ENCODE measurements at regions of chr17 and their contacts with region 1.

Region 1: DNA sequence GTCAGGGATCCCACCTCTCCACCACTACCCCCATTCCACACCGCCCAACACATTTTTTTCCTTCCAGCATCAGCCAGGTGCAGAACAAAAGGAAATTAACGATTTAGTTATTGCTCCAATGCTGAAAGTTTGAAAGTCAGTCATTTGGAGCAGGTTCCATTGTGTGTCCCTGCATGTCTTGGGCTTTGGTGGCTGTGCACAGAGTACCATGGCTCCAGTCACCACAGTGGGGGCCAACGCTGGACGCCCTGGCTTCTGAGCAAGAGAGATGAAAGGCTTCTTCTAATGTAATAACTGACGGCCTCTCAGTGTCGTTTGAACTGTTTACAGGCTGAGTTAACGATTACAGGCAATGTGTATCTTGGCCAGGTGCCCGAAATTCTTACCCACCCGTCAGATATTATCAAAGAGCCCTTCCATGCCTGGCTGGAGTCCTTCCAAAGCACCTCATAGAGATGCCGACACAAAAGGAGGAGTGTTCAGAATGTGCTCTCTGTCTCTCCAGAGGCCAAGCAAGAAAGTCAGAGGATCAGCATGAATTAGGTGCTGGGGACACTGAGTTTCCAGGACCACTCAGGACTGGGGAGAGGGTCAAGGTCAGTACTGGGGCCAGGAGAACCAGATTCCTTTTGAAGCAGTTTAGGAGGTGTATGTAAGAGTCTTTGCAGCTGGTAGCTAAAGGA is 25.9 kb downstream of the RNF43 start:
- DNase-seq: peak; percentile 34 to 91 (median 56)
- ATAC-seq: peak; percentile 89
- H3K4me3 ChIP-seq: no peak overlapping the region
- H3K27ac ChIP-seq: peak overlapping the region; percentile 72; the same call in 2 of the 3 replicates
- H3K4me1 ChIP-seq: peaks cover 19 to 55% of the 10 kb centered on the region in 2 experiments
- H3K27me3 ChIP-seq: no peaks in the 10 kb centered on the region
- CTCF ChIP-seq: no peak
- EP300 ChIP-seq: peak; percentile 85
- POLR2A ChIP-seq: no peak
- RAD21 ChIP-seq: no peak

Region 2: GRCh38 chr17:58172369-58173071 is 218.9 kb before region 1 on chr17:
- CTCF ChIA-PET with region 1: no interaction called
- POLR2A ChIA-PET with region 1: no interaction called
- in situ Hi-C with region 1: no loop called
- intact Hi-C with region 1: no loop called
- DNase-seq: peak; percentile 35 to 41 (median 38)
- ATAC-seq: peak; percentile 73; the same call in 2 of the 3 replicates
- H3K4me3 ChIP-seq: no peak overlapping the region
- H3K27ac ChIP-seq: no peak overlapping the region
- H3K4me1 ChIP-seq: no peaks in the 10 kb centered on the region
- H3K27me3 ChIP-seq: peaks cover 21 to 26% of the 10 kb centered on the region in 2 experiments
- CTCF ChIP-seq: peak; percentile 60 to 69 (median 64)
- EP300 ChIP-seq: no peak
- POLR2A ChIP-seq: no peak
- RAD21 ChIP-seq: peak; percentile 52 to 73; a peak in 3 of 4 replicates

Region 3: GRCh38 chr17:58417300-58418092 is 26.1 kb after region 1 on chr17 and contains the start of gene RNF43:
- CTCF ChIA-PET with region 1: no interaction called
- POLR2A ChIA-PET with region 1: interaction called, 5 read pairs
- in situ Hi-C with region 1: no loop called
- intact Hi-C with region 1: loop called (anchors 1 kb)
- DNase-seq: peak; percentile 92 to 97 (median 94)
- ATAC-seq: peak; percentile 97
- H3K4me3 ChIP-seq: peak within 1 kb of the TSS; percentile 22
- H3K27ac ChIP-seq: peak within 1 kb of the TSS; percentile 37
- H3K4me1 ChIP-seq: peaks cover 3 to 8% of the 10 kb centered on the region in 2 experiments; a peak in 4 of 5 replicates
- H3K27me3 ChIP-seq: no peaks in the 10 kb centered on the region
- CTCF ChIP-seq: peak; percentile 90 to 93 (median 91)
- EP300 ChIP-seq: peak; percentile 50; the same call in 1 of the 2 replicates
- POLR2A ChIP-seq: peak; percentile 58
- RAD21 ChIP-seq: peak; percentile 93 to 96
- polyA plus RNA-seq, gene RNF43: 0.29 to 0.51 TPM

Measured in K562 (cell line).